Activated CD4-positive, alpha-beta memory T cell treated with anti-CD3 and anti-CD28 coated beads, Interleukin-2, amount 10 ng/mL, durations not matched to agents 7 days and 5 days (primary cell): ENCODE measurements at regions of chr15 and their contacts with region 1.

Region 1: DNA sequence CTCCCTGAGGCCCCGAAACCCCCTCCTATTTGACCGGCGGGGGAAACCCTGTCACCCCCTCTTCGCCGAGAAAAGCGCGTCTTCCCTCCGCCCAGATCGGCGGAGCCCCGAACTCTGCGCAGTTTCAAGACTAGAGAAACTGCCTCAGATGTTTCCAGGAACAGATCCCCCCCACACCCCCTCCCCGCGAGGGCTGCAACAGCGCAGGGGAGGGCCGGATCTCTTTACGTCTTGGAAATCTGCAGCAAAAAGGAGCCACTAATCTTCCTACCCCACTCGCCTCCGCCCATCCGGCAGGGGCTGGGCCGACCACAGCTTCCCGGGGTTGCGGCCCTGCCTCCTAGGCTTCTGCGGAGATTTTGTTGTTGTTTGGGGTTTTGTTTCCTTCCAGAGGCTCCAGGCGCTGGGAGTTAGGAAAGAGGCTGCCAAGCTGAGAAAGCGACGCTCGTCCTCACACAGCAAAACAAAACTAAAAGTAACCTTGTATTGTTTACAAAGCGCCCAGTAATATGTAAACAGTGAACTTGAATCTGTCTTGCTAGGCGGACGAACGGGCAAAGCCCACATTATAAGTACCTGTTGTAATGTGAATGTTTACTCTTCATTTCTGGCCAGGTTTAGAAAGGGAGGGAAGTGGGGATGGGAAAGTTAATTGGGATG is 2.2 kb downstream of the FOXB1 start:
- DNase-seq: peak; percentile 91
- H3K4me3 Mint-ChIP-seq: peak overlapping the region; percentile 96
- H3K27ac Mint-ChIP-seq: peak overlapping the region; percentile 96
- H3K4me1 Mint-ChIP-seq: peaks cover 71% of the 10 kb centered on the region
- H3K27me3 Mint-ChIP-seq: peaks cover 76% of the 10 kb centered on the region

Region 2: DNA sequence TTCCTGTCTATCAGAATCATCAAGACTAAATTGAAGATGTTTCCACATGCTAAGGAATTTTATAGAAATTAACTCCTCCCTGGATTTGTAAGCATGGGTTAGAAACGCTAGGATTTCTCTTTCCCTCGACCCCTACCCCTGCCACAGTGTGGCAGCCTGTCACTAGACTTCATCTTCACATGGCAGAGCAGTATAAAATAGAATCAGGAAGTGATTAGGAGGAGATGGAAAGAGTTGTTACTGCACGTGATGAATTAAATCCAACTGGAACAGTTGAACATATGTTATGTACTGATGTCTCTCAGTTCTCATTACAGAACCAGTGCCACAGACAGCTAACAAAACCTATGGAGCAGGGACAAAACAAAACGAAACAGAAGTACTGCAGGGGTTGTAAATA is 187.2 kb before region 1 on chr15:
- CTCF ChIA-PET with region 1: no interaction called
- POLR2A ChIA-PET with region 1: no interaction called
- DNase-seq: no peak
- H3K4me3 Mint-ChIP-seq: no peak overlapping the region
- H3K27ac Mint-ChIP-seq: no peak overlapping the region
- H3K4me1 Mint-ChIP-seq: peaks cover 15% of the 10 kb centered on the region
- H3K27me3 Mint-ChIP-seq: peaks cover 29% of the 10 kb centered on the region

Region 3: GRCh38 chr15:59976480-59977271 is 29.7 kb before region 1 on chr15:
- CTCF ChIA-PET with region 1: interaction called, 4 read pairs
- POLR2A ChIA-PET with region 1: interaction called, 10 read pairs
- DNase-seq: peak; percentile 87
- H3K4me3 Mint-ChIP-seq: peak overlapping the region; percentile 55
- H3K27ac Mint-ChIP-seq: peak overlapping the region; percentile 90
- H3K4me1 Mint-ChIP-seq: peaks cover 40% of the 10 kb centered on the region
- H3K27me3 Mint-ChIP-seq: peaks cover 10% of the 10 kb centered on the region

Region 4: GRCh38 chr15:60017538-60018520 is 11.5 kb after region 1 on chr15:
- CTCF ChIA-PET with region 1: interaction called, 4 read pairs
- POLR2A ChIA-PET with region 1: interaction called, 10 read pairs
- DNase-seq: peak; percentile 33
- H3K4me3 Mint-ChIP-seq: no peak overlapping the region
- H3K27ac Mint-ChIP-seq: peak overlapping the region; percentile 38
- H3K4me1 Mint-ChIP-seq: peaks cover 31% of the 10 kb centered on the region
- H3K27me3 Mint-ChIP-seq: peaks cover 21% of the 10 kb centered on the region

Region 5: DNA sequence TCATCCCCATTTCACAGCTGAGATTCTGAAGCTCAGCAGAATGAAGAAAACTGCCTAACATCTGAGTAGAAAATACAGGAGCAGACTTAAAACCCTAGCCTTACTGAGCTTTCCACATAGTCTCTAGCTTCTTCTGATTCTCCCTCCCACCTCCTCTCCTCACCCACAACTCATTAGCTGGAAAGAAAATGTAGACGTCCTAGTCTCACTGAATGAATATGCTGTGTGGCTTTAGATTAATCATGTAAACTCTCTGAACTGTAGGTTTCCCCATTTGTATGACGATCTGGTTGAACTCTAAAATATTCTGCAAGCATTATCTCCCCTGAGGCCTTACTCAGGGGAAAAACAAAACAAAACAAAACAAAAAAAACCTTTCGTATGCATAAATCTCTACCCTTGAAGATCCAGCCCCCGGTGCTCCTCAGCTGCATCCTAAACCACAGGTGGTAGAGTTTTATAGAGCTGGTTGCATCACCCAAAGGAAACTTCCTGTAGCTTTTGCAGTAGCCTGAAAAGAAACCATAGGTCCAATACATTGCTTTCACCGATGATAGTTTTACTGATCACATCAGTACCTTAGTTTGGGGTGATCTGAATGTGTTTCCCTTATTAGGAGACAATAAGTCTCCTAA is 38.4 kb after region 1 on chr15:
- CTCF ChIA-PET with region 1: no interaction called
- POLR2A ChIA-PET with region 1: no interaction called
- DNase-seq: peak; percentile 55
- H3K4me3 Mint-ChIP-seq: peak overlapping the region; percentile 54
- H3K27ac Mint-ChIP-seq: peak overlapping the region; percentile 75
- H3K4me1 Mint-ChIP-seq: peaks cover 25% of the 10 kb centered on the region
- H3K27me3 Mint-ChIP-seq: peaks cover 7% of the 10 kb centered on the region

Region 6: GRCh38 chr15:60128000-60128376 is 121.7 kb after region 1 on chr15:
- CTCF ChIA-PET with region 1: interaction called, 10 read pairs
- POLR2A ChIA-PET with region 1: interaction called, 26 read pairs
- DNase-seq: no peak
- H3K4me3 Mint-ChIP-seq: peak overlapping the region; percentile 73
- H3K27ac Mint-ChIP-seq: peak overlapping the region; percentile 82
- H3K4me1 Mint-ChIP-seq: peaks cover 56% of the 10 kb centered on the region
- H3K27me3 Mint-ChIP-seq: peaks cover 3% of the 10 kb centered on the region

Region 7: GRCh38 chr15:60179786-60180391 is 173.6 kb after region 1 on chr15:
- CTCF ChIA-PET with region 1: interaction called, 12 read pairs
- POLR2A ChIA-PET with region 1: no interaction called
- DNase-seq: peak; percentile 35
- H3K4me3 Mint-ChIP-seq: no peak overlapping the region
- H3K27ac Mint-ChIP-seq: no peak overlapping the region
- H3K4me1 Mint-ChIP-seq: no peaks in the 10 kb centered on the region
- H3K27me3 Mint-ChIP-seq: peaks cover 38% of the 10 kb centered on the region

Region 8: DNA sequence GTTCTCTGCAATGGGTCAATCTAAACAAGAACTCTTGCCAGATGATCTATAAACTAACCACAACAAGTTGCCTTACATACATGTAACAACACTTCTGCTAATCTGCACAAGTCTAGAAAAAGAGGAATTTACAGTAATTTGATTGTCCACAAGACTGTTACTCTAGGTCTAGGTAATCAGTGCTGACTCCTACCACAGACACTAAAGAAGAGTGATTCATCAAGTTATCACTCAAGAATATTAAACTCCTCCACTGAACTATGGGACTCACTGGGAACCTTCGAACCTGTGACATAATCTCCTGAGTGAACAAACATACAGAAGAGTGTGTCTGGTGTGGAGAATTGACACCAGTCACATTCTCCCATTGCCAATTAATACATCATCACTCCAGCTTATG is 253.1 kb after region 1 on chr15:
- CTCF ChIA-PET with region 1: no interaction called
- POLR2A ChIA-PET with region 1: no interaction called
- DNase-seq: no peak
- H3K4me3 Mint-ChIP-seq: no peak overlapping the region
- H3K27ac Mint-ChIP-seq: no peak overlapping the region
- H3K4me1 Mint-ChIP-seq: peaks cover 14% of the 10 kb centered on the region
- H3K27me3 Mint-ChIP-seq: peaks cover 39% of the 10 kb centered on the region